ENCODE measurements at regions of chr16 and their contacts with region 1.

Region 1: GRCh38 chr16:87765776-87766484 is at the start of gene KLHDC4:
- DNase-seq: peak; percentile 91
- ATAC-seq: peak; percentile 71
- H3K4me3 Mint-ChIP-seq: peak within 1 kb of the TSS; percentile 99
- H3K27ac Mint-ChIP-seq: peak within 1 kb of the TSS; percentile 99
- H3K4me1 Mint-ChIP-seq: peaks cover 29% of the 10 kb centered on the region
- H3K27me3 Mint-ChIP-seq: no peaks in the 10 kb centered on the region
- total RNA-seq, gene KLHDC4: 99.4 to 105 TPM

Region 2: DNA sequence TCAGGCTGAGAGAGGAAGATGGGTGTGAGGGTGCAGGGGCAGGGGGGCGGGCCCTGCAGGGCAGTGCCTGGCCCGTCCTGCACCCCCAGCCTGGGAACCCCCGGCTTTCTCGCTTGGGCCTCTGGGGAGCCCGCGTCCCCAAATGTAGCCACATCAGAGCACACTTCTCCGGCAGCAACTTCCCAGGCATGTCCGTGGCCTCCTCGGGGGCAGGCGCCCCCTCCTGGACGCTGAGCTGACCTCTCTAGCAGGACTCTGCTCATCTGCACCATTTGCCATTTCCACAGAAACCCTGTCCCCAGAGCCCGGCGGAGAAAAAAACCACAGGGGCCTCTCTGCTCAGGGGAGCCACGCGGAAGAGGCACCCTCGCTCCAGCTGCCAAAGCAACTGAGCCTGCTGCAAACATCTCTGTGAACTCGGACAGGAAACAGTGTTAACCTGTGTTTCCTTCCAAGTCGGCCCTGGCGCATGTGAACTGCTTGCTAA is 63.6 kb before region 1 on chr16:
- POLR2A ChIA-PET with region 1: interaction called, 16 read pairs
- DNase-seq: peak; percentile 64
- ATAC-seq: peak; percentile 87
- H3K4me3 Mint-ChIP-seq: peak overlapping the region; percentile 37
- H3K27ac Mint-ChIP-seq: peak overlapping the region; percentile 82
- H3K4me1 Mint-ChIP-seq: peaks cover 29% of the 10 kb centered on the region
- H3K27me3 Mint-ChIP-seq: no peaks in the 10 kb centered on the region

Region 3: DNA sequence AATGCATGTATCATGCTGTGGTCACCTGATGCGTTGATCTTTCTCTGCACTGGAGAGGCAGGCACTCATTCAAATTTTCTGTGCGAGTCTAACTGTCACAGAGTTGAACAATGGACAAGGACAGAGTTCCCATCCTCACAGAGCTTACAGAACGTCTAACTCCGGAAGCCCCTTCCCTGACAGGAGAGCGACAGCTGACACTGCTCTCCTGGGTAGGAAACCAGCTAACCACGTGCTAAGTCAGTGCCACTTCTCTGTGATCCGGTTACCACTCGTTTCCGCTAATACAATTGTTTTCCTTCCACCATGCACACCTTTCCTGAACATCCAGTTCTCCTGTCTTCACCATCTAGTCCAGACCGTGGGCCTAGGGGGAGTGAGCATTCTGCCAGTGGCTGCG is 11.4 kb before region 1 on chr16:
- POLR2A ChIA-PET with region 1: interaction called, 16 read pairs
- DNase-seq: no peak
- ATAC-seq: no peak
- H3K4me3 Mint-ChIP-seq: no peak overlapping the region
- H3K27ac Mint-ChIP-seq: no peak overlapping the region
- H3K4me1 Mint-ChIP-seq: peaks cover 3% of the 10 kb centered on the region
- H3K27me3 Mint-ChIP-seq: no peaks in the 10 kb centered on the region

Region 4: GRCh38 chr16:87874639-87875465 is 108.9 kb after region 1 on chr16:
- POLR2A ChIA-PET with region 1: interaction called, 13 read pairs
- DNase-seq: no peak
- ATAC-seq: peak; percentile 52
- H3K4me3 Mint-ChIP-seq: peak overlapping the region; percentile 65
- H3K27ac Mint-ChIP-seq: peak overlapping the region; percentile 72
- H3K4me1 Mint-ChIP-seq: peaks cover 32% of the 10 kb centered on the region
- H3K27me3 Mint-ChIP-seq: peaks cover 1% of the 10 kb centered on the region

Measured in activated naive CD8-positive, alpha-beta T cell treated with anti-CD3 and anti-CD28 coated beads, Interleukin-2, amount 10 ng/mL, durations not matched to agents 7 days and 5 days (primary cell).